Mammary epithelial cell (primary cell): ENCODE measurements at regions of chr22 and their contacts with region 1.

Region 1: GRCh38 chr22:29871684-29872083 is 11.3 kb upstream of the MTMR3 start:
- DNase-seq: no peak
- H3K4me3 ChIP-seq: no peak overlapping the region
- H3K27ac ChIP-seq: no peak overlapping the region
- H3K4me1 ChIP-seq: peaks cover 16% of the 10 kb centered on the region
- H3K27me3 ChIP-seq: no peaks in the 10 kb centered on the region
- CTCF ChIP-seq: no peak

Region 2: GRCh38 chr22:29369460-29369859 is 502.2 kb before region 1 on chr22:
- CTCF ChIA-PET with region 1: interaction called, 19 read pairs
- dilution Hi-C with region 1: no loop called
- in situ Hi-C with region 1: no loop called
- intact Hi-C with region 1: no loop called
- DNase-seq: no peak
- H3K4me3 ChIP-seq: no peak overlapping the region
- H3K27ac ChIP-seq: no peak overlapping the region
- H3K4me1 ChIP-seq: no peaks in the 10 kb centered on the region
- H3K27me3 ChIP-seq: no peaks in the 10 kb centered on the region
- CTCF ChIP-seq: no peak

Region 3: GRCh38 chr22:29798801-29799680 is 72.6 kb before region 1 on chr22:
- CTCF ChIA-PET with region 1: no interaction called
- dilution Hi-C with region 1: loop called (anchors 5 kb)
- in situ Hi-C with region 1: no loop called
- intact Hi-C with region 1: no loop called
- DNase-seq: peak; percentile 87
- H3K4me3 ChIP-seq: no peak overlapping the region
- H3K27ac ChIP-seq: peak overlapping the region; percentile 33
- H3K4me1 ChIP-seq: peaks cover 21% of the 10 kb centered on the region
- H3K27me3 ChIP-seq: no peaks in the 10 kb centered on the region
- CTCF ChIP-seq: peak in 1 of 2 donors; percentile 11

Region 4: GRCh38 chr22:29837780-29838598 is 33.7 kb before region 1 on chr22 and contains the start of gene ASCC2:
- CTCF ChIA-PET with region 1: no interaction called
- dilution Hi-C with region 1: no loop called
- in situ Hi-C with region 1: no loop called
- intact Hi-C with region 1: loop called (anchors 2 kb)
- DNase-seq: peak; percentile 98
- H3K4me3 ChIP-seq: peak within 1 kb of the TSS; percentile 86 to 96 (median 91)
- H3K27ac ChIP-seq: peak within 1 kb of the TSS; percentile 67
- H3K4me1 ChIP-seq: peaks cover 24% of the 10 kb centered on the region
- H3K27me3 ChIP-seq: no peaks in the 10 kb centered on the region
- CTCF ChIP-seq: no peak
- total RNA-seq, gene ASCC2: 41.3 to 72.2 TPM

Region 5: DNA sequence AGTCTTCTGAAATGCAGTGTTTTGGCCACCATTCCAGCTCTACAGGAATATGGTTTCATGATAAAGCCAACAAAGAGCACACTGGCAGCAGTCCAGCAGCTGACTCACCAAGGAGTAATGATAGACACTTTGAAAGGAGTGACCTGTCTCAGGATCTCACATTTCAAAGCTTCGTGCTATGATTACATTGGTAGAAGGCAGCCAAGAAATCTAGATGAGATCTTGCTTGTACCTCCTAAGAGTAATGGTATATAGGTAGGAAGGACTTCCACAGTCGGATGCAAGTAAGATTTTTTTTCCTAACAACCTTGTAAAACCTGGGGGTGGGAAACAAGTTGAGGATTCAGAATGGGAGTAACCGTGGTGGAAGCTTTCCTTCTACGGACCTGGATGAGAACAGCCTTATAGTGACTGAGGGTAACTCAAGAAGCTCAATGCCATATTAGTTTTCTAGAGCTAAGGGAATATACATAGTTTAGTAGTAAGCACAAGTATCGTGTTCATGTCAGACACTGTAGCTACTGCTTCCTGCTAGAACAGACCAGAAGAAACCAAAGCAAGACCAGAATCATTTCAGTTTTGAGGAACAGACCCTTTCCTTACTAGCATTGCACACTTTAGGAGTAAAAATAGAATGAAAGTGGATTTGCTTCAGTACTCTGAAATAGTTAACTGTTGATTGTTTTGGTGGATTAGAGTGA is 36.3 kb after region 1 on chr22:
- CTCF ChIA-PET with region 1: no interaction called
- dilution Hi-C with region 1: loop called (anchors 5 kb)
- in situ Hi-C with region 1: no loop called
- intact Hi-C with region 1: no loop called
- DNase-seq: peak; percentile 94
- H3K4me3 ChIP-seq: no peak overlapping the region
- H3K27ac ChIP-seq: peak overlapping the region; percentile 42
- H3K4me1 ChIP-seq: peaks cover 20% of the 10 kb centered on the region
- H3K27me3 ChIP-seq: no peaks in the 10 kb centered on the region
- CTCF ChIP-seq: no peak

Region 6: DNA sequence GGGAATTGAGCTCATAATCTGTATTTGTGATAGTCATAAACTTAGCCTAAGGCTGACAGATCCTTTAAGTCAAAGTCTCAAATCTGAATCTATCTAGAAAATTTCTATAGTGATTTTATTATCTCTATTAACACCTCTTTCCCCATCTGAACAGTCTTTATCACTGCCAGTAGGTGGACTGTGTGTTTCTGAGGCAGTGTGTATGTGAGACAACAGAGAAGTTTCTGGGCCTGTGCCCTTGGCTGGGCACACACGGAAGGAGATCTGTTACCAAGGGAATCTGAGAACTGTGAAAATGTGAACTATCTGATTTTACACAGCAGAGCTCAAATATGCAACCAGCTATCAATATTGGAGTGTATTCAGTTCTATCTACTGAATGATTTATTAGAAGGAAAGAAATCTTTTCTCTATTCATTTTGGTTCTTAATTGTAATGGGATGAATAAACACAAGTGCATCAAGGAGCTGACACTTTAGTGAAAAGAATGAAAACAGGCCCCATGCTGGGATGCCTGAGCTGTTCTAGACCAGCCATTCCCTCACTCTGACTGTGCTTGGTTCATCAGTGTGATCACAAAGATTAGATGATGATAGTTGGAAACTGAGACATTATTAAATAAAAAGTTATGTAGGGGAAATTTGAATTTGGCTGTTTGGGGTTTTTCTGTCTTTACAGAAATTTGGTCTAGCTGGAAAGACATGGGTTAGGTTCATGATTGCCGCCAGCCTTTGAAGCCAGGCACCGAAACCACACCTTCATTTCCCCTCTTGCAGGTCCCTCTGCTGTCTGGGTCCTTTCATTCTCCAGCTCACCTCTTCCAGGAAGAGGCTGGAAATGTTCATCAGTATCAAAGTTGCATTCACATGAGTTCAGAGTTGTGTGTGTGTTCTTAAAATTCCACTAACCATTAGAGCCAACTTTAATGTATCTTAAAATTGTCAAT is 306.8 kb after region 1 on chr22:
- CTCF ChIA-PET with region 1: no interaction called
- dilution Hi-C with region 1: no loop called
- in situ Hi-C with region 1: no loop called
- intact Hi-C with region 1: no loop called
- DNase-seq: no peak
- H3K4me3 ChIP-seq: no peak overlapping the region
- H3K27ac ChIP-seq: no peak overlapping the region
- H3K4me1 ChIP-seq: peaks cover 18% of the 10 kb centered on the region
- H3K27me3 ChIP-seq: no peaks in the 10 kb centered on the region
- CTCF ChIP-seq: peak in 1 of 2 donors; percentile 16